ENCODE measurements at regions of chr2 and their contacts with region 1.

Region 1: DNA sequence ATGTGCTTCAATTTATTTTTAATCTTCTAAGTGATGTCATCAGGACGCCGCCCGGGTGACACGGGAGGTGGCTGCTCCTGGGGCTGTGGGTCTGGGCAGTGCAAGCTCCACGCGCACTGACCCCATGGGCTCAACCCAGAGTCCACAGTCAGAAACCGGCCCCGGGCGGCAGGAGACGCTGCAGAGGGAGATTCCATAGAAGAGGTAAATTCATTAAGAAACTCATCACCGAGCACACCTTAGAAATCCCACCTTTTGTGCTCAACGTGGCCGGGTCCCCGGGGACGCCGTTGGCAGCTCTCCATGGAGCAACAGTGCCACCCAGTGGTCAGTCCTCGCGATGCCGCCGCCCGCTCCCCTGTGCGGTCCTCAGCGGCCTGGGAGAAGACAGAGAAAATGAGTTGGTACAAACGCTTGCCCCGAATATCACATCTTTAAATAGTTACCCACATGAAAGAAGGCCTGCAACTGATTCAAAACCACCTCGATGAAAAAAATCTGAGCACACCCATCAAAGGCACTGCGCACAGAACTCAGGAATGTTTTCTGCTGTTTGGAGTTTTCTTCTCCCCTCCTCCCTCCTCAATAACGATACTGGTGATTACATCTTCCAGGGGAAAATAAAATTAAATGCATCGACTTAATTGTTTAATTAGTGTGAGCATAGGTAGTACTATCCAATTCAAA is 92.6 kb downstream of the CMPK2 start:
- DNase-seq: peak; percentile 92
- H3K4me3 Mint-ChIP-seq: no peak overlapping the region
- H3K27ac Mint-ChIP-seq: no peak overlapping the region
- H3K4me1 Mint-ChIP-seq: peaks cover 9% of the 10 kb centered on the region
- H3K27me3 Mint-ChIP-seq: peaks cover 18% of the 10 kb centered on the region

Region 2: GRCh38 chr2:6103949-6104348 is 669.2 kb before region 1 on chr2:
- intact Hi-C with region 1: loop called (anchors 10 kb)
- DNase-seq: no peak
- H3K4me3 Mint-ChIP-seq: no peak overlapping the region
- H3K27ac Mint-ChIP-seq: no peak overlapping the region
- H3K4me1 Mint-ChIP-seq: no peaks in the 10 kb centered on the region
- H3K27me3 Mint-ChIP-seq: no peaks in the 10 kb centered on the region